Activated T-helper 1 cell treated with anti-CD3 and anti-CD28 coated beads, Interleukin-12 subunit alpha, Interleukin-12 subunit beta, Interleukin-2, Interleukin-4 antibody, amounts not matched to agents 30 ng/mL and 10 ng/mL and 1 ng/mL, durations not matched to agents 14 hours and 24 hours and 36 hours (primary cell): ENCODE measurements at regions of chr12 and their contacts with region 1.

Region 1: GRCh38 chr12:107760809-107761501 is at the start of gene PRDM4:
- DNase-seq: peak; percentile 91
- H3K4me3 Mint-ChIP-seq: peak within 1 kb of the TSS; percentile 92
- H3K27ac Mint-ChIP-seq: peak within 1 kb of the TSS; percentile 89
- H3K4me1 Mint-ChIP-seq: peaks cover 40% of the 10 kb centered on the region
- H3K27me3 Mint-ChIP-seq: peaks cover 3% of the 10 kb centered on the region
- total RNA-seq, gene PRDM4: 28.1 and 30.2 TPM in 2 replicates

Region 2: GRCh38 chr12:107685360-107686248 is 75.4 kb before region 1 on chr12 and contains the start of gene PWP1:
- intact Hi-C with region 1: loop called (anchors 1 kb)
- DNase-seq: peak; percentile 95
- H3K4me3 Mint-ChIP-seq: peak within 1 kb of the TSS; percentile 96
- H3K27ac Mint-ChIP-seq: peak within 1 kb of the TSS; percentile 97
- H3K4me1 Mint-ChIP-seq: peaks cover 36% of the 10 kb centered on the region
- H3K27me3 Mint-ChIP-seq: no peaks in the 10 kb centered on the region
- total RNA-seq, gene PWP1: 54.4 and 57.1 TPM in 2 replicates

Region 3: DNA sequence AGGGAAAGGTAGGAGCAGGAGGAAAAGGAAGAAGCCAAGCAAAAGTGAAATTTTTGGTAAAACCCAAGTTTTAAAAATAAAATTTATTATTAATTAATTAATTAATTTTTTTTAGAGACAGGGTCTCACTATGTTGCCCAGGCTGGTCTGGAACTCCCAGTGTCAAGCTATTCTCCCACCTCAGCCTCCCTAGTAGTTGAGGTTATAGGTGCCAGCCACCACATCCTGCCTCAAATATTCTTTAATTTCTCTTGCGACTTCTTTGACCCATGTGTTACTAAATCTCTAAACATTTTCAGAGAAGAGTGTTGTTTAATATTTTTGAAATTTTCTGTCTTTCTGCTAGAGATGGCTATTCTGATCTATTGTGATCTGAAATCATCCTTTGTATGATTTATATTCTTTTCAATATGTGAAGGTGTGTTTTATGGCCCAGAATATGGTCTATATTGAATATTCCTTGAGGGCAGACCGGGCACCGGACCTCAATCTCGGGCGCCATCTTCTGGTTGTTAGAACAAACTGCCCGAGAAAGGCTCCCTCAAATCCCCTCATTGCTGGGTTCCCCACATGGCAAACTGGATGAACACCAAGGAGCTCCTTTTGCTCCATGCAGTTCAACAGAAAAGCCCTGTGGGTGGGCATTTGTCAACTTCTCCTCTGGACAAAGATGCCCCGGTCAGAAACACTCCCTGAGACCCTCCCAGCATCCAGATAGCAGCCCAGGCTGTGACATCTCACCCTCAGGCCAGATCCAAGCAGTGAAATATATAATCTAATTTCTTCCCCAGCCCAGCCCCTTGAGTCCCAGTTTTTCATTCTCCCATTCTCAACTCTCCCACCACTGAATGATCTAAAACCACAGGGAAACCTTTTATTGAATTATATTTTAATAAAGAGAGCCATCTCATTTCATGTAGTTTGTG is 124.1 kb after region 1 on chr12:
- intact Hi-C with region 1: loop called (anchors 1 kb)
- DNase-seq: peak; percentile 10
- H3K4me3 Mint-ChIP-seq: no peak overlapping the region
- H3K27ac Mint-ChIP-seq: no peak overlapping the region
- H3K4me1 Mint-ChIP-seq: no peaks in the 10 kb centered on the region
- H3K27me3 Mint-ChIP-seq: peaks cover 6% of the 10 kb centered on the region

Region 4: GRCh38 chr12:107912421-107913004 is 151.6 kb after region 1 on chr12:
- intact Hi-C with region 1: loop called (anchors 2 kb)
- DNase-seq: peak; percentile 52
- H3K4me3 Mint-ChIP-seq: peak overlapping the region; percentile 82
- H3K27ac Mint-ChIP-seq: no peak overlapping the region
- H3K4me1 Mint-ChIP-seq: peaks cover 5% of the 10 kb centered on the region
- H3K27me3 Mint-ChIP-seq: peaks cover 8% of the 10 kb centered on the region

Region 5: DNA sequence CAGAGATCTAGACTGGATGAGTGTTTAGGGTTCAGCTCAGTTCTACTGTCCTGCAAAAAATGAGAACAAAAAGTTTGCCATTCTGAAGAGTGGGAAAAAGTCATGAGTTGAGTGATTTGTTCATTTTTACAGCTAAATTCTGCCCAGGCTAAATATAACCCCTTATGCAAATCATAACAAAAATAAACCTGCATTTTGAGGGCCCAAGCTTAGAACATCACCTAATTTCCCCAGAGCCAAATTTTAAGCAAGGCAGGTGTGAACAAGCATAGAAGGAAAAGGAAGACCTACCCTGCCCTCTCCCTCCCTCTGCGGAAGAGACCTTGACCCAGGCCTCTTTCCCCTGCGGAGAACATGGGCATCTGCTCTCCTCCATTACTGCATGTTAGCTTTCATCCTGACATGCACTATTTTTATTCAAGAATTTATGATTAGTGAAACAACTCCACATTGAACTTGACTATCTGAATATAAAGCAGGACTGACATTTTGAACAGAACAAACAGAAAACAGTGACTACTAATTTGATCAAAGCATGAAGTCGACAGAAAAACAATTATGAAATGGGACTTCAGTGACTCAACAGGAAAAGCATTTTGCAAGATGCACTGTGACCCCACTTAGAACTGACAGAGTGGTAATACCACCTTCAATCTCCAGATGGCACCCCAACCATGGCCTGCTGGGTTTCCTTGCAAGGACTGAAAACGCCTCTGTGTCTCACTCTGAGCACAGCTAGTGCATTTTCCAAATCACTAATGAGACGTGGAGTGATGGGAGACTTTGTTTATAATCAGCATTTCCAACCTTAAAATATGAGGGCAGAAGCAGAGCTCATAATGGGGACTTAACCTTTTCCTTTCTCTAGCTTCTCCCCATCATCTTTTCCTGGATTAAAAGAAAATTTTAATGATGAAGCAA is 903.6 kb after region 1 on chr12:
- intact Hi-C with region 1: no loop called
- DNase-seq: peak; percentile 79
- H3K4me3 Mint-ChIP-seq: no peak overlapping the region
- H3K27ac Mint-ChIP-seq: peak overlapping the region; percentile 72
- H3K4me1 Mint-ChIP-seq: peaks cover 17% of the 10 kb centered on the region
- H3K27me3 Mint-ChIP-seq: no peaks in the 10 kb centered on the region